Activated T-helper 2 cell treated with anti-CD3 and anti-CD28 coated beads, Interferon-gamma antibody, Interleukin-2, Interleukin-4, amounts not matched to agents 10 μg/mL and 5 μg/mL and 100 μg/mL, durations not matched to agents 14 hours and 24 hours and 36 hours (primary cell): ENCODE measurements at regions of chr7 and their contacts with region 1.

Region 1: DNA sequence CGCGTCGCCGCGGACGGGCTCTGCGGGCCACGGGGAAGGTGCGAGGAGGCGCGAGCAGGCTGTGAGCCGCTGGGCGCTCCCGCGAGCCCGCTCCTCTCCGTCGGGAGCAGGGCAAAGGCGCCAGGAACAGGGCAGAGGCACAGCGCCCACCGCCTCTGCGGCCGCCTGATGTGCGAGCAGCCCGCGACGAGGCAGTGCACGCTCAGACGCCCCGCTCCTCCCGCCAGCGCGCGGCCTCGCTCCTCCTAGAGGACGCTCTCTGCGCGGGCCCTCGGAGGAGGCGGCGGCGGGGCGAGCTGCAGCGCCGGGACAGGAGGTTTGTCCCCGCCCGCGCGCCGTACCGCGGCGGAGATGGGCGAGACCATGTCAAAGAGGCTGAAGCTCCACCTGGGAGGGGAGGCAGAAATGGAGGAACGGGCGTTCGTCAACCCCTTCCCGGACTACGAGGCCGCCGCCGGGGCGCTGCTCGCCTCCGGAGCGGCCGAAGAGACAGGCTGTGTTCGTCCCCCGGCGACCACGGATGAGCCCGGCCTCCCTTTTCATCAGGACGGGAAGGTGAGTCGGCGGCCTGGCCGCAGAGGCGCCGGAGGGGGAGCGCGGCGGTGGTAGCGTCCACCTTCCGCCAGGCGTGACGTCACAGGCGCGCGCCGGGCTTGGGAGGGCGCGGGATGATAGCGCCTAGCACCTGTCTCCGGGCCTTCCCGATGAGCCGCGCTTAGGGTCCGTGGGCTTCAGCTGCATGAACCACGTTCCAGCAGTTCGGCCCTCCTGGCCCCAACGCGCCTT is 731 bp downstream of the LANCL2 start:
- DNase-seq: peak; percentile 94
- H3K4me3 Mint-ChIP-seq: peak overlapping the region; percentile 97
- H3K27ac Mint-ChIP-seq: peak overlapping the region; percentile 98
- H3K4me1 Mint-ChIP-seq: peaks cover 18% of the 10 kb centered on the region
- H3K27me3 Mint-ChIP-seq: peaks cover 3% of the 10 kb centered on the region

Region 2: GRCh38 chr7:55280031-55280454 is 85.8 kb before region 1 on chr7:
- intact Hi-C with region 1: loop called (anchors 5 kb)
- DNase-seq: peak; percentile 32
- H3K4me3 Mint-ChIP-seq: no peak overlapping the region
- H3K27ac Mint-ChIP-seq: no peak overlapping the region
- H3K4me1 Mint-ChIP-seq: no peaks in the 10 kb centered on the region
- H3K27me3 Mint-ChIP-seq: peaks cover 2% of the 10 kb centered on the region

Region 3: DNA sequence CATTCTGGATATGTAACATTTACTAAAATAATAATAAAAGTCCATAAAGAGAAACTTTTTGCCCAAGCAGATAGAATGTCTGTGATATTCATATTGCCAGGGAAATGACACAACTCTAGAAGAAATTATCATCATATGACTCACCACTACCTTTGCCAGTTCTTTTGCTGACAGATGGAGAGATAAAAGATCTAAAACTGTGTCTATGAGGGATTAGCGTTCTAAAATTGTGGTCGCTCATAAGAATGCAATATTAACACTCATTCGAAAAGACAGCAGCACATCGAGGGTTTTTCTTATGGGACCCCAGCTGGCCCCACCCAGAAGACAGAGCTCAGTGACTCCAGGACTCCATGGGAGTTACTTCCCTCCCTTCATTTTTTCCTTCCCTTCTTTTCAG is 17.4 kb before region 1 on chr7:
- intact Hi-C with region 1: loop called (anchors 1 kb)
- DNase-seq: no peak
- H3K4me3 Mint-ChIP-seq: no peak overlapping the region
- H3K27ac Mint-ChIP-seq: no peak overlapping the region
- H3K4me1 Mint-ChIP-seq: peaks cover 17% of the 10 kb centered on the region
- H3K27me3 Mint-ChIP-seq: peaks cover 32% of the 10 kb centered on the region

Region 4: DNA sequence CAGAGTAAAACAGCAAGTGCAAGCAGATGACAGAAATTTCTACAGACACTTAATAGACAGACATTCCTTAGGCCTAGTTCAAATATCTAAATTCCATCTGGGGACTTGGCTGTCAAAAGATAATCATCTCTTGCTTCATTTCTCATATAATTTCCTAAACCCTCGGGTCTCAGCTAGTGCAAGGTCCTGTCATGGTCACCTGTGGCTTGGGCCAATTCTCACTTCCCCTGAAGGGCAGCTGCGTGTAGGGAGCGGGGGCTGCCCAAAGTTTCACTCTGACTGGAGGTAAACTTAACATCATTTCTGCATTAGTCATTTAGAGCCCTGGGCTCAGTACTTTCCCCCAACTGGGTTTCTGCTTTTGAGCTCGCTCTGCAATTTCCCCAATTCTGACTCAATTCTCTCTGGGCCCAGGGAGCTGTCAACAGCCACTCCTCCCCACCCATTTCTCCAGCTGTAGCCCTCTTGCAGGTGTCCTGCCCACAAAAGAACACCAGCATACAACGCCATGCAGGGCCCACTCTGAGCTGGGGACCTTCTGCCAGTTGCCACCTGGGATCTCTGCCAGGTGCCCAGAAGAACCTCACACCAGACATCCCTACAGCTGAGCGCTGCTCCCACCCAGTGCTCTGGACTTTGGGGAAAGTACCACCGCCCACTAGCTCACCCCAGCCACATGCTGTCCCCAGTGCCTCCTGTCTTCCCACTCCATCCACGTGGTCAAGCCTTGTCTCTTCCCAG is 168.5 kb after region 1 on chr7:
- intact Hi-C with region 1: loop called (anchors 1 kb)
- DNase-seq: peak; percentile 75
- H3K4me3 Mint-ChIP-seq: peak overlapping the region; percentile 68
- H3K27ac Mint-ChIP-seq: peak overlapping the region; percentile 96
- H3K4me1 Mint-ChIP-seq: peaks cover 79% of the 10 kb centered on the region
- H3K27me3 Mint-ChIP-seq: no peaks in the 10 kb centered on the region

Region 5: DNA sequence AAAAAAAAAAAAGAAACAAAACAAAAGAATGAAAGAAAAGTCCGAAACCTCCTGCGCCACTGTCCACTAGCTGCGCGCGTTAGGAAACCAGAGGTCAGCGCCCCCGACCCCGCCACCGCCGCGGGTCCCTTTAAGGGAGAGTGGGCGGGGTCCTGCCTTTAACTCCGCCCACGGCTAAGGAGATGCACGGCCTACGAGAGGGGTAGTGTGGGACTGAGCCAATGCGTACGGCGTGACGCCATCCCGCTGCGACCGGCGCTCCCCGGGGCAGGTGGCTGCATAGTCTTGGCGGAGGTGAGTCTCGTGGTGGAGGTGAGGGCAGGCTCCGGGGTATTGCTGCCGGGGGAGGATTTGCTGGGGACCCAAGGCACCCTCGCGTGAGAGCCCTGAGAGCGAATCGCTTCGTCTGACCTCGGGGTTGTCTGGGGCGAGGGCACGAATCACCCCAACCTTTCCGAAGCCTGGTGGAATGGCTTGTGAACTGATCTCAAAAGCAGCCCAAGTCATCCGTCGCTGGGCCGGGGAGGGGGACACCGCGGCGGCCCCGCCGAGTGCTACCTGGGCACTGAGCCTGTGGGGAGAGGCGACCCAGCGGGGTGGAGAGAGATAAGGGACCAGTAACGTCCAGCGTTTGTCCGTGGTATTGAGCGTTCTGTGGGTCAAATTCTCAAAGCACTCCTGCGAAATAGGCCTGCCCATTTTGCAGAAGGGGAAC is 585.9 kb after region 1 on chr7 and contains the start of gene MRPS17:
- intact Hi-C with region 1: loop called (anchors 5 kb)
- DNase-seq: peak; percentile 89
- H3K4me3 Mint-ChIP-seq: peak within 1 kb of the TSS; percentile 90
- H3K27ac Mint-ChIP-seq: peak within 1 kb of the TSS; percentile 90
- H3K4me1 Mint-ChIP-seq: peaks cover 8% of the 10 kb centered on the region
- H3K27me3 Mint-ChIP-seq: no peaks in the 10 kb centered on the region
- total RNA-seq, gene MRPS17: 28.3 and 29.4 TPM in 2 replicates

Region 6: GRCh38 chr7:56106108-56107073 is 740.5 kb after region 1 on chr7 and contains the start of gene CHCHD2:
- intact Hi-C with region 1: loop called (anchors 1 kb)
- DNase-seq: peak; percentile 93
- H3K4me3 Mint-ChIP-seq: peak within 1 kb of the TSS; percentile 99
- H3K27ac Mint-ChIP-seq: peak within 1 kb of the TSS; percentile 99
- H3K4me1 Mint-ChIP-seq: peaks cover 21% of the 10 kb centered on the region
- H3K27me3 Mint-ChIP-seq: no peaks in the 10 kb centered on the region
- total RNA-seq, gene CHCHD2: 660 TPM in 2 replicates